GM23248 (cell line): ENCODE measurements at regions of chr17 and their contacts with region 1.

Region 1: GRCh38 chr17:55527540-55528118 is 16.4 kb upstream of the SMIM36 start:
- DNase-seq: peak; percentile 74
- H3K4me3 ChIP-seq: no peak overlapping the region
- H3K27ac ChIP-seq: no peak overlapping the region
- H3K4me1 ChIP-seq: no peaks in the 10 kb centered on the region
- H3K27me3 ChIP-seq: no peaks in the 10 kb centered on the region

Region 2: DNA sequence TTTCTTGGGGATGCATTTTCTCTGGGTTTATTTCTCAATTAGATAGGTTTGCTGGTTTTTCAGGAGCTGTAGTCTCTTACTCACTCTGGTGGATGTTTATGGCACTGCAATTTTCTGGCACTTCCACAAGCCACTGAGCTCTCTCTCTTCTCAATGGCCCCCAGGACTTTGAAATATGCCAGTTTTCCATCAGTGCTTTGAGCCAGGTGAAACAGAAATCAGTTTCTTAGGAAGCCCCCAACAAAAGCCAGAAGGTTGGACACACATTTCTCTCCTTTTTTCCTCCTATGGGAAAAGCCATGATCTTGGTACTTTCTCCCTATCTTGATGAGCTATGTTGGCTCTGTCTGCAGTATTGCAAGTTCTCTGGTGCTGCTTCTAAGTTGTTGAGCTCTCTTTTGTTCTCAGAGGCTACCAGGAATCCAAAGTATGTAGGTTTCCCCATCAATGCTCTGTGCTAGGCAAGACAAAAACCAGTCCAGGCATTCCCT is 74.3 kb after region 1 on chr17:
- in situ Hi-C with region 1: loop called (anchors 5 kb)
- DNase-seq: peak; percentile 74
- H3K4me3 ChIP-seq: no peak overlapping the region
- H3K27ac ChIP-seq: no peak overlapping the region
- H3K4me1 ChIP-seq: no peaks in the 10 kb centered on the region
- H3K27me3 ChIP-seq: no peaks in the 10 kb centered on the region; the same call in 1 of the 2 replicates

Region 3: DNA sequence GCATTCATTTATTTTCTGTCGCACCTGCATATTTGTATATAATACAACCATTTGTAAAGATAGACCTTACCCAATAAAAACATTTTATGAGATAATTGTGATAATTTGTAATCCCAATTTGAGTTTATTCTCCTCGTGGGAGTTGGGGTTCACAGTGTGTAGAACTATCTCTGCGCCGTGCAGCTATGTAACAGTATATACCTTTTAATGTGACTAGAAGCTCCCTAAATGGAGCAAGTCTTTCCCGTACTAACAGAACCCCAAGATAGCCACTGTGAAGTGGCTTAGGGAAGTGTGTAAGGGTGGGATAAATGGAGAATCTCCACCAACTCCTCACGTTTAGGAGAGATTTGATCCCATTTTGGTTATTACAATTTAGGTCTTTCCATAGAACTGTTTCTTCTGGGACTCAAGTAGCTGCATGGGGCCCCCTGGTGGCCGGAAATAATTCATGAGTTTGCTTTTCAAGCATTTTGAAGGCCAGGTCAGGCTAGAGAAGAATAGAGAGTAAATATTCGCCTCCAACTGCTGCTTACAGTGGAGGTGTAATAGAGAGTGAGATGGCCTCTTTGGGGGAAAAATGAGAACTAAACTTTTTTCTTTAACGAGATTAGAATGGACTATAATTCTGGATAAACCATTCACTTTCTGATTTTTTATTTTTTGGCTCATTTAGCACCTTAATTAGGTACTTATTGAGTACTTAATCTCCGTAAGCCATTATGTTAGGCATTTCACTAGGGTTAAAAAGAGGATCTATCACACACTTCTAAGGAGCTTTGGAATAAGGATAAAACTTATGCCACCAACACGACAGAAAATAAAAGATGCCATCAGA is 190.5 kb after region 1 on chr17:
- in situ Hi-C with region 1: loop called (anchors 10 kb)
- DNase-seq: peak; percentile 78
- H3K4me3 ChIP-seq: no peak overlapping the region
- H3K27ac ChIP-seq: no peak overlapping the region
- H3K4me1 ChIP-seq: peaks cover 13% of the 10 kb centered on the region
- H3K27me3 ChIP-seq: no peaks in the 10 kb centered on the region

Region 4: GRCh38 chr17:55769623-55770000 is 242.0 kb after region 1 on chr17:
- in situ Hi-C with region 1: loop called (anchors 10 kb)
- DNase-seq: peak; percentile 97
- H3K4me3 ChIP-seq: peak overlapping the region; percentile 34
- H3K27ac ChIP-seq: peak overlapping the region; percentile 93
- H3K4me1 ChIP-seq: peaks cover 17% of the 10 kb centered on the region
- H3K27me3 ChIP-seq: no peaks in the 10 kb centered on the region